ENCODE measurements at regions of chr11 and their contacts with region 1.

Region 1: DNA sequence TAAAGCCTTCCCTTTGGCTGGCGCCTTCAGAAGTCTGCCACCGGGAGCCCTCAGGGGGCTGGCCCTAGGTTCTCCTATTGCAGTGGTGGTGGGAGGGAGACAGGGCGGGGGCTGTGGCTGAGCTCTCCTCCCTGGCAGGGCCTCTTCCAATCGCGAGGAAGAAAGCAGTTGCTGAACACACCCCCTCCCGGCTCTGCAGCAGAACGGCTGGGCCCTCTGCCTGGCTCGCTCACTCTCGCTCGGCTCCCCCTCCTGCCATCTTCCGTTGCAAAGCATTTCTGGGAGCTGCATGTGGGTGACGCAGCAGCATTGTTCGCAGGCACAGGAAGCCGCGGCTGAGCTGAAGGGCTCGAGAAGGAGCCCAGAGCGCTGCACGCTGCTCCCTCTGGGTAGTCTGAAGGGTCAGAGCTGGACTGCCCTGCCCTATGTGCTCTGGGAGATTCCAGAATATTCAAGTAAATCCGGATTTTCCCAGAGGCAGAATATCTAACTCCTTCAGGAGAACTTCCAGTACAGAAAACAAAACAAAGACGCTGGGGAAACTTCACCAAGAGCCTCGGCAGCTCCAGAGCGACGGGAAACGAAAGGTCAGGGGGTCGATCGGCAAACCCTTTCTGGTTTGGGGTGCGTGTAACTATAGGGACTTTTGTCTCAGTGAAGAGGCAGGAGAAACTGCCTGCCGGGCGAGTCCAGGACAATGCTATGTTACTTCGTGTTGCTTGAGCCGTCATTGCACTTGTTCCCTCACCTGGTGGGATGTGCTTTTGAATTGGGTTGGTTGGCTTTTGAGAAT is 26.3 kb upstream of the GRK2 start:
- DNase-seq: peak; percentile 100
- H3K4me3 ChIP-seq: peak overlapping the region; percentile 46
- H3K4me3 Mint-ChIP-seq: peak overlapping the region; percentile 96
- H3K27ac Mint-ChIP-seq: peak overlapping the region; percentile 98
- H3K4me1 ChIP-seq: peaks cover 30% of the 10 kb centered on the region
- H3K4me1 Mint-ChIP-seq: peaks cover 34% of the 10 kb centered on the region
- H3K27me3 ChIP-seq: no peaks in the 10 kb centered on the region
- H3K27me3 Mint-ChIP-seq: no peaks in the 10 kb centered on the region
- CTCF ChIP-seq: no peak

Region 2: GRCh38 chr11:67053896-67054842 is 185.8 kb before region 1 on chr11:
- CTCF ChIA-PET with region 1: interaction called, 16 read pairs
- POLR2A ChIA-PET with region 1: interaction called, 5 read pairs
- intact Hi-C with region 1: loop called (anchors 2 kb)
- DNase-seq: peak; percentile 83 to 85
- H3K4me3 ChIP-seq: no peak overlapping the region
- H3K4me3 Mint-ChIP-seq: no peak overlapping the region
- H3K27ac Mint-ChIP-seq: peak overlapping the region; percentile 92
- H3K4me1 ChIP-seq: peaks cover 40% of the 10 kb centered on the region
- H3K4me1 Mint-ChIP-seq: peaks cover 26% of the 10 kb centered on the region
- H3K27me3 ChIP-seq: no peaks in the 10 kb centered on the region
- H3K27me3 Mint-ChIP-seq: no peaks in the 10 kb centered on the region
- CTCF ChIP-seq: peak; percentile 96 to 99

Region 3: GRCh38 chr11:67118801-67119584 is 121.0 kb before region 1 on chr11 and contains the start of gene KDM2A:
- CTCF ChIA-PET with region 1: interaction called, 10 read pairs
- POLR2A ChIA-PET with region 1: interaction called, 17 read pairs
- intact Hi-C with region 1: loop called (anchors 2 kb)
- DNase-seq: peak; percentile 99 to 100
- H3K4me3 ChIP-seq: peak within 1 kb of the TSS; percentile 92
- H3K4me3 Mint-ChIP-seq: peak within 1 kb of the TSS; percentile 99
- H3K27ac Mint-ChIP-seq: peak within 1 kb of the TSS; percentile 96
- H3K4me1 ChIP-seq: peaks cover 54% of the 10 kb centered on the region
- H3K4me1 Mint-ChIP-seq: peaks cover 22% of the 10 kb centered on the region
- H3K27me3 ChIP-seq: no peaks in the 10 kb centered on the region
- H3K27me3 Mint-ChIP-seq: no peaks in the 10 kb centered on the region
- CTCF ChIP-seq: peak in 1 of 2 experiments; percentile 47
- total RNA-seq, gene KDM2A: 122 and 134 TPM in 2 replicates

Region 4: DNA sequence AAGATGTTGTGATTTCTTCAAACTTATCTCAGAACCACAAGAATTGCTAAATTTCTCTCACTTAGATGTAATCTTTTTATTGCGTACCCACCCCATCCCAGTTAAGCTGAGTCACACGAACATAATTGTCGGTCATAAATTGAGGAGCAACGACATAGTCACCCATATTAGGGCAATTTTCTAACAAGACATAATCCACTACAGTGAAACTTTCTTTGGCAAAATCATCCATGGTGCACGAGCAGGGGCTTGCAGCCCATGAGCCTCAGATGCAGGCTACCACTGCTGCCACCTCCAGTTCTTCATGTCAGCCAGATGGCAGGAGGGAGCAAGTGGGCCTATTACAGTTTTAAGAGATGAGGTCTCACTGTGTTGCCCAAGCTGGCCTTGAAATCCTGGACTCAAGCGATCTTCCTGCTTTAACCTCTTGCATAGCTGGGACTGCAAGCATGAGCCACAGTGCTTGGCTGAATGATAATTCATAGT is 44.0 kb before region 1 on chr11:
- CTCF ChIA-PET with region 1: no interaction called
- POLR2A ChIA-PET with region 1: no interaction called
- intact Hi-C with region 1: no loop called
- DNase-seq: peak in 1 of 2 experiments; percentile 32
- H3K4me3 ChIP-seq: no peak overlapping the region
- H3K4me3 Mint-ChIP-seq: no peak overlapping the region
- H3K27ac Mint-ChIP-seq: no peak overlapping the region
- H3K4me1 ChIP-seq: no peaks in the 10 kb centered on the region
- H3K4me1 Mint-ChIP-seq: peaks cover 8% of the 10 kb centered on the region
- H3K27me3 ChIP-seq: no peaks in the 10 kb centered on the region
- H3K27me3 Mint-ChIP-seq: no peaks in the 10 kb centered on the region
- CTCF ChIP-seq: peak in 1 of 2 experiments; percentile 5

Region 5: DNA sequence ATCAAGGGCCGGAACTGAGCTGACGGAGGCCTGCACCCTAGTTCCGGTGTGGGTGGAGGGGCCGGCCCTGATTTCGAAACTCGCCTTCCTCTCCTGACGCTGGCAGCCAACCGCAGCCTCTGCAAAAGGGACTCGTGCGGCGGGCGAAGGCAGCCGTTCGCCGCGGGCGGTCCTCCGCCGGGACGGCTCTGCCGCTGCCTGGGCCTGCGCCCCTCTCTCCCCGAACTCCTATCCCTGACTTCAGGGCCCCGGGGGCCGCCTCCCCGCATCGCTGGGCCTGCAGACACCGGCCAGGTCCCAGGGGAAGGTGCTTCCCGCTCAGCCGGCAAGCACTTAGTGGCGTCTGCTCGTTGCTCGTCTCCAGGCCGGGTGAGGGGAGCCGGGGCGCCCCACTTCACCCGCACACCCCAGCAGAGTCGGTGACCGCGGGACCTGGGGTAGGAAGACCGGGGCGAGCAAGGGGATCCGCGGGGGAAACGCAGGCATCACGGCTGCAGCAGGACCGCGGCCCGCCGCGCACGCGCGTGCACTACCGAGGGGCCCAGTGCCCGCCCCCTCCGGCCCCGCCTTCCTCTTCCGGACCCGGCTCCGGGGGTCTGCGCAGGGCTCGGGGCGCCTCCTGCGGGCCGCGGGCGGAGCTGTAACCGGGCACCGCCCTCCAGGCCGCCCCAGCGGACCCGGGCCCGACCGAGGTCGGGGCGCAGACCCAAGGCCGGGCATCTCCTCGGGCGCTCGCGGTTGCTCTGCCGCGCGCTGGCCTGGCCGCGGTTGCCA is 48.7 kb after region 1 on chr11:
- CTCF ChIA-PET with region 1: interaction called, 9 read pairs
- POLR2A ChIA-PET with region 1: interaction called, 10 read pairs
- intact Hi-C with region 1: loop called (anchors 2 kb)
- DNase-seq: peak; percentile 94 to 95
- H3K4me3 ChIP-seq: peak overlapping the region; percentile 91
- H3K4me3 Mint-ChIP-seq: peak overlapping the region; percentile 99
- H3K27ac Mint-ChIP-seq: peak overlapping the region; percentile 90
- H3K4me1 ChIP-seq: peaks cover 20% of the 10 kb centered on the region
- H3K4me1 Mint-ChIP-seq: peaks cover 29% of the 10 kb centered on the region
- H3K27me3 ChIP-seq: no peaks in the 10 kb centered on the region
- H3K27me3 Mint-ChIP-seq: no peaks in the 10 kb centered on the region
- CTCF ChIP-seq: peak; percentile 51 to 56

Region 6: GRCh38 chr11:67583247-67584204 is 343.5 kb after region 1 on chr11 and contains the start of gene GSTP1:
- CTCF ChIA-PET with region 1: no interaction called
- POLR2A ChIA-PET with region 1: no interaction called
- intact Hi-C with region 1: loop called (anchors 10 kb)
- DNase-seq: peak; percentile 93 to 98
- H3K4me3 ChIP-seq: peak within 1 kb of the TSS; percentile 87
- H3K4me3 Mint-ChIP-seq: peak within 1 kb of the TSS; percentile 75
- H3K27ac Mint-ChIP-seq: peak within 1 kb of the TSS; percentile 85
- H3K4me1 ChIP-seq: peaks cover 48% of the 10 kb centered on the region
- H3K4me1 Mint-ChIP-seq: peaks cover 61% of the 10 kb centered on the region
- H3K27me3 ChIP-seq: no peaks in the 10 kb centered on the region
- H3K27me3 Mint-ChIP-seq: no peaks in the 10 kb centered on the region
- CTCF ChIP-seq: peak; percentile 62 to 93
- total RNA-seq, gene GSTP1: 1,799 and 1,911 TPM in 2 replicates

Measured in Caco-2 (cell line).